Gastrocnemius medialis (tissue), 4 donors: ENCODE measurements at regions of chr19 and their contacts with region 1.

Region 1: DNA sequence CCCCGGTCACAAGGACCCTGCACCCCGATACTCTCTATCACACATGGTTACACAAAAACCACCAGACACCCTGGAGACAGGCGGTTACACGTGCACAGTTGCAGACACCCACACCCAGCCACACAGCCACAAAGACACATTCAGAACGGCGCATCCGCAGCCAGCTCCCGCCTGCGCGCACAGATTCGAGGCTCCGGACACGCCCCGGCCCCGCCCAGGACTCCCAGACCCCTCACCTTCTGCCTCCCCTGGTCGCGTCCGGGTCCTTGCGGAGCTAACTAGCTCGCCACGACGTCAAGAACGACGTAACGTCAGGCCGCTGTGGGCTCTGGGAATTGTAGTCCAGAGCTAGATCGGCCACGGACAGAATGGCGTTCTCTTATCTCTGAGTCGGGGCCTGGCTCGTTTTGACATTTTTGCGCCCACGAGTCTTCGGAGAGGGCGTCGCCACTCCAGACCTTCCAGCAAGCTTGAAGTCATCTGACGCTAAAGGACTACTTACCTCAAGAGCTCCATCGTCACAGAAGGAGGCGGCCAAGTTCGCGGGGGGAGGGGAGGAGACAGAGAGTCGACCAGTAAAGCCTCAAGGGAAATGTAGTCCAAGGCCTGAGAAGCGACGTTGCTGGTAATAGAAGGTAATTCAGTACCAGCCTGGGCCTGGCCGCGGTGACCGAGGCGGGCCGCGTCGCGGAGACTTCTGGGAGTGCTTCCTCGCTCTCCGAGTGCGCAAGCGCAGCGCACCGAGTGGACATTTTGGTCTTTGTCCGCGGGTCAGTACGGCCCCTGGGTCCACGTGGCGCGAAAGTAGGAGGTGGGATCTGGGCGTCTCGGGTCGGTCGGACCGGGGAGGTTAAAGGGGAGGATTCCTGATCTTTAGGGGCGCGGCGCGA is at the starts of genes ZNF146 and ZNF565:
- DNase-seq: peak; percentile 96 to 98
- ATAC-seq: peak; percentile 98
- H3K4me3 ChIP-seq: peak within 1 kb of the TSS; percentile 76 to 93 (median 77)
- H3K27ac ChIP-seq: peak within 1 kb of the TSS; percentile 89 to 98 (median 96)
- H3K4me1 ChIP-seq: peaks cover 28 to 29% of the 10 kb centered on the region in 2 donors
- H3K27me3 ChIP-seq: no peaks in the 10 kb centered on the region
- CTCF ChIP-seq: peak in 1 of 5 experiments; percentile 8
- POLR2A ChIP-seq: peak; percentile 78 to 87
- total RNA-seq, gene ZNF146: 47.8 to 108 (median 91.2) TPM
- total RNA-seq, gene ZNF565: 1.7 to 5.3 (median 2.3) TPM

Region 2: GRCh38 chr19:36054119-36054732 is 160.4 kb before region 1 on chr19 and contains the start of gene THAP8:
- in situ Hi-C with region 1: no loop called
- intact Hi-C with region 1: loop called (anchors 1 kb)
- DNase-seq: peak; percentile 100
- ATAC-seq: peak; percentile 92 to 95
- H3K4me3 ChIP-seq: peak within 1 kb of the TSS; percentile 67 to 93 (median 83)
- H3K27ac ChIP-seq: peak within 1 kb of the TSS; percentile 87 to 99 (median 96)
- H3K4me1 ChIP-seq: peaks cover 12 to 13% of the 10 kb centered on the region in 2 donors
- H3K27me3 ChIP-seq: no peaks in the 10 kb centered on the region
- CTCF ChIP-seq: peak; percentile 50 to 58 (median 54)
- POLR2A ChIP-seq: peak; percentile 65 to 72
- total RNA-seq, gene THAP8: 6.1 to 10.5 (median 6.1) TPM

Region 3: GRCh38 chr19:36132489-36132891 is 82.1 kb before region 1 on chr19:
- in situ Hi-C with region 1: no loop called
- intact Hi-C with region 1: loop called (anchors 1 kb)
- DNase-seq: no peak
- ATAC-seq: no peak
- H3K4me3 ChIP-seq: no peak overlapping the region
- H3K27ac ChIP-seq: no peak overlapping the region
- H3K4me1 ChIP-seq: peaks cover 16 to 20% of the 10 kb centered on the region in 2 donors
- H3K27me3 ChIP-seq: no peaks in the 10 kb centered on the region
- CTCF ChIP-seq: no peak
- POLR2A ChIP-seq: no peak

Region 4: GRCh38 chr19:36489118-36489919 is 274.7 kb after region 1 on chr19 and contains the start of gene ZNF566:
- in situ Hi-C with region 1: no loop called
- intact Hi-C with region 1: loop called (anchors 10 kb)
- DNase-seq: peak; percentile 75 to 89
- ATAC-seq: peak; percentile 99 to 100
- H3K4me3 ChIP-seq: peak within 1 kb of the TSS; percentile 76 to 98 (median 76)
- H3K27ac ChIP-seq: peak within 1 kb of the TSS; percentile 90 to 98 (median 91)
- H3K4me1 ChIP-seq: peaks cover 5 to 11% of the 10 kb centered on the region in 2 donors
- H3K27me3 ChIP-seq: no peaks in the 10 kb centered on the region
- CTCF ChIP-seq: no peak
- POLR2A ChIP-seq: peak; percentile 28 to 33
- total RNA-seq, gene ZNF566: 4.1 to 8.3 (median 5.9) TPM